Pancreas (tissue), 10 donors: ENCODE measurements at regions of chr11 and their contacts with region 1.

Region 1: GRCh38 chr11:62556108-62556871 is 9.7 kb upstream of the AHNAK start:
- DNase-seq: peak; percentile 61 to 81 (median 70)
- ATAC-seq: peak; percentile 41 to 69 (median 57)
- H3K4me3 ChIP-seq: peak overlapping the region in 1 of 4 donors; percentile 7
- H3K27ac ChIP-seq: peak overlapping the region; percentile 6 to 93 (median 68)
- H3K4me1 ChIP-seq: peaks cover 18 to 57% (median 46%) of the 10 kb centered on the region in 3 donors
- H3K27me3 ChIP-seq: no peaks in the 10 kb centered on the region
- CTCF ChIP-seq: no peak

Region 2: DNA sequence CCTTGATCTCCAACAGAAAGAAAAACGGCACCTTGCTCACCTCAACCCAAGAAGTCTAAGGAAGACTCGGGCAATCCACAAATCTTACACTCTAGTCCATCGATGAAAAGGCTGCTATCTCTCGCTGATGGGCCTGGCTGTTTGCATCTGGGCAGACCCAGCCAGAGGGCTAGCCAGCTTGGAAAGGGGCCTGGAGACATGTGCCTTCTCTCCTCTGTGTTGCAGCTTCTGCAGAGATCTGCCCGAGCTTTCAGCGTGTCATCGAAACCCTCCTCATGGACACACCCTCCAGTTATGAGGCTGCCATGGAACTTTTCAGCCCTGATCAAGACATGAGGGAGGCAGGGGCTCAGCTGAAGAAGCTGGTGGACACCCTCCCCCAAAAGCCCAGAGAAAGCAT is 134.3 kb before region 1 on chr11:
- intact Hi-C with region 1: loop called in 1 of 3 experiments (anchors 5 kb)
- DNase-seq: peak in 1 of 6 donors; percentile 12
- ATAC-seq: no peak
- H3K4me3 ChIP-seq: no peak overlapping the region
- H3K27ac ChIP-seq: no peak overlapping the region
- H3K4me1 ChIP-seq: no peaks in the 10 kb centered on the region
- H3K27me3 ChIP-seq: no peaks in the 10 kb centered on the region
- CTCF ChIP-seq: no peak

Region 3: DNA sequence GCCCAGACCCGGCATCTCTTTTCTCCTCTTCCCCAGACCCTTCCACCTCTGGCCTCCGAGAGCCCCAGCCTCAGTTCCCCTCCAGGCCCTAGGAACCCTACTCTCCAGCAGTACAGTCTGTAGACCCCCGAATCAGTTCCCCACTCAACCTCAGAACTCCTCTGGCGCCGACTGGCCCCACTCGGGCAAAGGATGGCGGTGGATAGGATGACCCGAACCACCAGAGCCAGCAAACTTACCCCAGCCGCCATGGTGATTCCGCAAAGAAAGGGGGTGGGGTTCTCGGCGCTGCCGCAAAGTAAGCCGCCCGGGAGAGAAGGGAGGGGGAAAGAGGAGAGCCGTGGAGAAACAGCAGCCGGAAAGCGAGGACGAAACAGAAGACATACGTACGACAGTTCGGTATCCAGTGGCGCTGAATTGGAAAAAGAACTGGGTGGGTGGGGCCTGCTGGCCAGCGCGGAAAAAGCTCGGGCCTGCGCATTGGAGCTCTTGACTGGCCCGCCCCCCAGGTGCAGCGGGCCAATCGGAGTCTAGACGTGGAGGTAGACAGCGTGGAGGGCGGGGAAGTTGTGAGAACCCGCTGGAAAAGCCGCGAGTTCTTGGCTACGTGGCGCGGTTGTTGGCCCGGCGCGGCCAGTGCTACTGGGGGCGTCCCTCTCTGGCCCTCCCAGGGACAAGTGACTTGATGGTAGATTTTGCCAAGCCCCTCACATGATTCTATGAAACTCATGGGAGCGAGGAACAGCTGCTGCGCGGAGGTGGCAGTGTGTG is 17.5 kb after region 1 on chr11 and contains the start of gene EEF1G:
- intact Hi-C with region 1: loop called in 1 of 3 experiments (anchors 2 kb)
- DNase-seq: peak; percentile 93 to 100 (median 98)
- ATAC-seq: peak; percentile 91 to 97 (median 94)
- H3K4me3 ChIP-seq: peak within 1 kb of the TSS; percentile 57 to 78 (median 66)
- H3K27ac ChIP-seq: peak within 1 kb of the TSS; percentile 75 to 98 (median 89)
- H3K4me1 ChIP-seq: peaks cover 6 to 13% (median 13%) of the 10 kb centered on the region in 3 donors
- H3K27me3 ChIP-seq: no peaks in the 10 kb centered on the region
- CTCF ChIP-seq: no peak
- total RNA-seq, gene EEF1G: 723 to 1,171 (median 1,053) TPM

Region 4: GRCh38 chr11:62621567-62622470 is 65.5 kb after region 1 on chr11 and contains the start of gene B3GAT3:
- intact Hi-C with region 1: no loop called
- DNase-seq: peak; percentile 97 to 100 (median 99)
- ATAC-seq: peak; percentile 98 to 99 (median 98)
- H3K4me3 ChIP-seq: peak within 1 kb of the TSS; percentile 55 to 79 (median 62)
- H3K27ac ChIP-seq: peak within 1 kb of the TSS; percentile 49 to 84 (median 78)
- H3K4me1 ChIP-seq: peaks cover 0 to 9% (median 7%) of the 10 kb centered on the region in 3 donors
- H3K27me3 ChIP-seq: no peaks in the 10 kb centered on the region
- CTCF ChIP-seq: no peak
- total RNA-seq, gene B3GAT3: 13.2 to 24.1 (median 17.1) TPM

Region 5: DNA sequence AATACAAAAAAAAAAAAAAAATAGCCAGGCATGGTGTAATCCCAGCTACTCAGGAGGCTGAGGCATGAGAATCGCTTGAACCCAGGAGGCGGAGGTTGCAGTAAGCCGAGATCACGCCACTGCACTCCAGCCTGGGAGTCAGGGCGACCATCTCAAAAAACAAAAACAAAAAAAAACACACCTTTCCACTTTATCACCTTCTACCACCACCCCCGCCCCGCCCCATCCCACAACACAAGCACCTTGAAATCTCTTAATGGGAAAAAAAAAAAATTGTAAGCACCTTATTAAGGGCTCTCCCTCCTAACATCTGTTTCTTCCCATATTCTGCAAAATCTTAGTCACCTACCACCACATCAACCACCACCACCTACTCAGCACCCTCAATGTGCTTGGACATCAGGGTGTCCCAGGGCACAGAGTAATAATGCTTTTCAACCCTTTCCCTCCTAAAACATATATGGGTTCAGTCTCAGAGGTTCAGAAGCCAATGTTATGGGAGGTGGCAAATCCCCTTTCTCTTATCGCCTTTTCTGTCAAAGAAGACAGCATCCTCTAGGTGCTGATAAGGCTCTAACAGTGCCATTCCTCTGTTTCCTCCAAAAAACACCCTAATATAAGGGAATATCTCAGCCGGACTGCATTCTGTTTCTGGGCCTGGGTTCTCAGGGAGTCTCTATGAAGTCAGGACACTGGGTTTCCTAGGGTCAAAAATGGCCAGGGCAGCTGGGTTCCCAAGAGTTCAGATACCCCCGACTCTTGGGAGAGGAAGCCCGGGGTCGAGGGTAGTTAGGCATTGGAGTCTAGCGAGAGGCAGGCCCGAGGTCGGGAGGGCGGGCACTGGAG is 96.1 kb after region 1 on chr11:
- intact Hi-C with region 1: no loop called
- DNase-seq: no peak
- ATAC-seq: no peak
- H3K4me3 ChIP-seq: peak overlapping the region; percentile 76 to 92 (median 83)
- H3K27ac ChIP-seq: peak overlapping the region; percentile 62 to 89 (median 87)
- H3K4me1 ChIP-seq: peaks cover 0 to 9% (median 8%) of the 10 kb centered on the region in 3 donors
- H3K27me3 ChIP-seq: no peaks in the 10 kb centered on the region
- CTCF ChIP-seq: no peak